Mucosa of descending colon (tissue), 3 donors: ENCODE measurements at regions of chr3 and their contacts with region 1.

Region 1: DNA sequence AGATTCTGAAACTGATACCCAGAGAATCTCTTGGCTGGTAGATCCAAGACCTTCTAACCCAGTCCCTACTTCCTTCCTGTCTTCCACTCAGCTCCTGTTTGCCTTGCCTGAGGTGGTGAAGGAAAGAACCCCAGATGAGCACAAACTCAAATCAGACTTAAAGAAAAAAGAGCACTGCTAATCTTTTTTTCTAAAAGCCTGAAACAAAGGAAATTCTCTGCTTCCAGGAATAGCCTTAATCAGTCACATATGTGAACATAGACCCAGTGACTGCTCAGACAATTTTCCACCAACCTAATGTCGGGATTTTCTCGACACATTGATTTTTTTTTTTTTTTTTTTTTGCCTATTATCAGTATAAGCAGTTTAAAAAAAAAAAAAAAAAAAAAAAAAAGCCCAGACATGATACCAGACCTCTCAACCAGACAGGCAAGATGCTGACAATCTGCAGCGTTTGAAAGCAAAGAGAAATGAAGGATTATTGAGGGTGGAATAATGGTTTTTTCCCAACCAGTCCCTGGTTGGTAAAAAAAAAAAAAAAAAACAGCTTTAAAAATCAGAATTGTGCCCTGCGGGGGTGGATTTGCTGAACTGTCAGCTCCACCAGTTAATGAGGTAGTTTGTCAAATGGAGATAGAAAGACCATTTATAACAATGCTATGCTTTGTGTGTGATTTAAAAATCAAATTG is 256.8 kb upstream of the RARB start:
- DNase-seq: no peak
- ATAC-seq: no peak
- H3K4me3 ChIP-seq: no peak overlapping the region
- H3K4me1 ChIP-seq: no peaks in the 10 kb centered on the region
- CTCF ChIP-seq: no peak

Region 2: GRCh38 chr3:25033407-25034029 is 137.7 kb before region 1 on chr3:
- intact Hi-C with region 1: no loop called
- DNase-seq: peak in 2 of 3 donors; percentile 32 to 62
- ATAC-seq: peak; percentile 57
- H3K4me3 ChIP-seq: no peak overlapping the region
- H3K4me1 ChIP-seq: no peaks in the 10 kb centered on the region
- CTCF ChIP-seq: peak; percentile 31

Region 3: DNA sequence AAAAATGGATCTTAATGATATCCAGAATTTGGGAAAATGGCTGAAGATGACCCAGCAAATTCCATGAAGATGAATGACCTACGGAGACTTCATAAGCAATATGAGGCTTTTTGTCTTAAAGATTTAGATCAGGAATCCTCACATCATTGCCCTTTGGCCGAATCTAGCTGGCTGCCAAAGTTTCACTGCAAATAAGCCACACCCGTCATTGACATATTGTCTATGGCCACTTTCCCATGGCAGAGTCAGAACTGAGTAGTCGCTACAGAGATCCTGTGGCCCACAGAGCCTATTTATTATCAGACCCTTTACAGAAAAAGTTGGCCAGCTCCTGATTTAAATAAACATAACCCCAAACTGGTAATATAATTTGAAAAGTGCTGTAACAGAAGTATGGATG is 50.6 kb before region 1 on chr3:
- intact Hi-C with region 1: loop called in 1 of 2 experiments (anchors 10 kb)
- DNase-seq: peak in 2 of 3 donors; percentile 39 to 84
- ATAC-seq: peak; percentile 79
- H3K4me3 ChIP-seq: no peak overlapping the region
- H3K4me1 ChIP-seq: peaks cover 13% of the 10 kb centered on the region
- CTCF ChIP-seq: no peak